Breast epithelium (tissue), 4 donors: ENCODE measurements at regions of chr6 and their contacts with region 1.

Region 1: DNA sequence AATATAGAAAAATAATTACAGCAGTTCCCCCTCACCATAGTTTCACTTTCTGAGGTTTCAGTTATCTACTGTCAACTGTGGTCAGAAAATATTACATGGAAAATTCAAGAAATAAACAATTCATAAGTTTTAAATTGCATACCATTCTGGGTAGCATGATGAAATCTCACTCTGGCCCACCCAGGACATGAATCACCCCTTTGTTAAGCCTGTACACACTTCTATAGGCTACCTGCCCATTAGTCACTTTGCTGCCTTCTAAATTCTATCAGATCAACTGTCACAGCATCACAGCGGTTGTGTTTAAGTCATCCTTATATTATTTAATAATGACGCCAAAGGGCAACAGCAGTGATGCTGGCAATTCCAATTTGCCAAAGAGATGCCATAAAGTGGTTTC is 140.3 kb upstream of the RUNX2 start:
- DNase-seq: no peak
- H3K4me3 ChIP-seq: no peak overlapping the region
- H3K27ac ChIP-seq: no peak overlapping the region
- H3K4me1 ChIP-seq: no peaks in the 10 kb centered on the region
- H3K27me3 ChIP-seq: no peaks in the 10 kb centered on the region
- CTCF ChIP-seq: no peak
- POLR2A ChIP-seq: no peak

Region 2: GRCh38 chr6:45054610-45055009 is 133.2 kb before region 1 on chr6:
- intact Hi-C with region 1: loop called (anchors 10 kb)
- DNase-seq: no peak
- H3K4me3 ChIP-seq: no peak overlapping the region
- H3K27ac ChIP-seq: no peak overlapping the region
- H3K4me1 ChIP-seq: no peaks in the 10 kb centered on the region
- H3K27me3 ChIP-seq: no peaks in the 10 kb centered on the region
- CTCF ChIP-seq: no peak
- POLR2A ChIP-seq: no peak